HEK293 (cell line): ENCODE measurements at regions of chr14 and their contacts with region 1.

Region 1: GRCh38 chr14:24806061-24806678 is 172.2 kb upstream of the GZMB start:
- H3K4me3 ChIP-seq: no peak overlapping the region
- H3K27ac ChIP-seq: no peak overlapping the region
- H3K4me1 ChIP-seq: peaks cover 5% of the 10 kb centered on the region
- CTCF ChIP-seq: peak; percentile 68; the same call in 1 of the 2 replicates

Region 2: DNA sequence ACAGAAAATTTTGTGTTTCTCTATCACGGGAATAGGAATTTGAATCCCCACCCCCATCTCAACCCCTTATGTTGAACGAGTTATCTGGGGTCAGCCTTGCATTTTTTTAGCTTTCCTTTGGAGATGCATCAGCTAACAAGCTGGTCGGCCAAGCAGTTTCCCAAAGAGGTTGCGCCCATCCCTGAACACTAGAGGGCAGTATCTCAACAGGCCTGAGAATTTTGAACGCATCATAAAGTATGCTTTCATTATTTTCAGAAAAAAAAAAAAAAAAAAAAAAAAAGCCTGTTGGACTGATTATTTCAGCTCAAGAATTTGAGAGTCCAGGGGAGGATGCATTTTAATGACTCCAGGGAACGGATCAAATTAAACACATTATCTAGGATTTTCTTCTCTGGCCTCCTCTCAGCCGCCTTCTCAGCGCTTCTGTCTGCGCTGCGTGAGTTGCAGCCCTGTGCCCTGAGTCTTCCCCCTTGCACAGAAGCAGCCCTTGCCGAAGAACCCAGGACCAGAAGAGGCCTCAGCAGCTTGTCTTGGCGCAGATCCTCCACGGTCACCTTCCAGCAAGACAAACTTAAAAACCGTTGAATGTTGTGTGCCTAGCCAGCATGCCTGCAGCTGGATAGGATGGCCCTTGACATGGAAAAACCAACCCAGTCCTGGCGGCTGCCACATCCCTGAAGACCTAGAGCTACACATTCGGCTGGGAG is 95.6 kb before region 1 on chr14:
- CTCF ChIA-PET with region 1: interaction called, 12 read pairs
- POLR2A ChIA-PET with region 1: no interaction called
- H3K4me3 ChIP-seq: no peak overlapping the region
- H3K27ac ChIP-seq: no peak overlapping the region
- H3K4me1 ChIP-seq: no peaks in the 10 kb centered on the region
- CTCF ChIP-seq: no peak

Region 3: GRCh38 chr14:24774187-24774915 is 31.8 kb before region 1 on chr14:
- CTCF ChIA-PET with region 1: no interaction called
- POLR2A ChIA-PET with region 1: no interaction called
- H3K4me3 ChIP-seq: no peak overlapping the region
- H3K27ac ChIP-seq: no peak overlapping the region
- H3K4me1 ChIP-seq: no peaks in the 10 kb centered on the region
- CTCF ChIP-seq: no peak

Region 4: DNA sequence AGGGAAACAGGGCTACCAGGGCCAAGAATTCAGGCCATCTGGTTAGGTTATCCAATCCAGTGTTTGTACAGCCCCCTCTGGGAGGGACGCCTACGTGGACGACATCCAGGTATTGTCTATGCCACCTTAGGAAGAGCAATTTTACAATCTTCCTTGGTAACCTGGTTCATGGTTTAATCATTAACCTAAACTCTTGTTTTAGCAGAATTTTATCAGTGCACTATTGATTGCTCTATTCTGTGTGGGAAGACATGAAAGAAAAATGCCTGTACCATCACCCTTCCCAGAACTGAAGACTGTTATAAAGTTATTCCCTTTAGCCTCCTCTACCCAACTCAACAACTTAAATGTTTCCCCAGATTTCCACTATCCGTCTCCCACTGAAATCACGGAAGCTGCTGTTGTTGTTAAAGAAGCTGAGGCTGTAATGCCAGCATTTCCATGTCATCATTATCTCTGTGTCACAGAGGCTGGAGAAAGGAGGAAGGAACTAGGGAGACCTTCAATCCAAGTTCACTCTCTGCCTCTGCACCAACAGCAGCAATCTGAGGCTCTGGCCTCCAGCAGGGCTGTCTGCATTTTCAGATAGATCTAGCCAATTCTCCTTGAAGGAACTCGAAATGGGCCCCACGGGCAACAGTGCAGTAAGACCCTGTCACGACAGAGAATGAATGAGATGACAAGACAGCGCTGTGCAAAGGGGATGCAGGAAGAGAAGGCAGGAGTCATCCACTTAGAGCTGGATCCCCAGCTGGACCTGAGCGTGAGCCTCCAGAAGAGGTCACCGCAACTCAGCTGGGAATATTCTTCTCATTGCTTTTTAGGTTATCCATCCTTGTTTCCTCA is 11.3 kb after region 1 on chr14:
- CTCF ChIA-PET with region 1: interaction called, 14 read pairs
- POLR2A ChIA-PET with region 1: no interaction called
- H3K4me3 ChIP-seq: no peak overlapping the region
- H3K27ac ChIP-seq: peak overlapping the region; percentile 31
- H3K4me1 ChIP-seq: peaks cover 10% of the 10 kb centered on the region
- CTCF ChIP-seq: peak; percentile 57

Region 5: GRCh38 chr14:25042362-25043299 is 236.5 kb after region 1 on chr14:
- CTCF ChIA-PET with region 1: interaction called, 43 read pairs
- POLR2A ChIA-PET with region 1: interaction called, 5 read pairs
- H3K4me3 ChIP-seq: no peak overlapping the region
- H3K27ac ChIP-seq: peak overlapping the region; percentile 64
- H3K4me1 ChIP-seq: peaks cover 17% of the 10 kb centered on the region
- CTCF ChIP-seq: peak; percentile 54; the same call in 1 of the 2 replicates

Region 6: GRCh38 chr14:25132732-25133422 is 326.7 kb after region 1 on chr14:
- CTCF ChIA-PET with region 1: interaction called, 75 read pairs
- POLR2A ChIA-PET with region 1: no interaction called
- H3K4me3 ChIP-seq: no peak overlapping the region; the same call in 1 of the 2 replicates
- H3K27ac ChIP-seq: no peak overlapping the region
- H3K4me1 ChIP-seq: no peaks in the 10 kb centered on the region
- CTCF ChIP-seq: peak; percentile 63